Activated CD4-positive, alpha-beta T cell treated with anti-CD3 and anti-CD28 coated beads for 36 hours (primary cell): ENCODE measurements at regions of chr22 and their contacts with region 1.

Region 1: GRCh38 chr22:31160328-31160978 is 471 bp downstream of the RNF185 start:
- DNase-seq: peak; percentile 47
- ATAC-seq: peak; percentile 45
- H3K4me3 Mint-ChIP-seq: peak overlapping the region; percentile 85
- H3K27ac Mint-ChIP-seq: peak overlapping the region; percentile 95
- H3K4me1 Mint-ChIP-seq: peaks cover 29% of the 10 kb centered on the region
- H3K27me3 Mint-ChIP-seq: no peaks in the 10 kb centered on the region

Region 2: GRCh38 chr22:31173386-31174145 is 13.1 kb after region 1 on chr22:
- CTCF ChIA-PET with region 1: interaction called, 3 read pairs
- POLR2A ChIA-PET with region 1: no interaction called
- intact Hi-C with region 1: loop called in 1 of 2 experiments (anchors 1 kb)
- DNase-seq: peak; percentile 16
- ATAC-seq: peak; percentile 94
- H3K4me3 Mint-ChIP-seq: peak overlapping the region; percentile 29
- H3K27ac Mint-ChIP-seq: peak overlapping the region; percentile 80
- H3K4me1 Mint-ChIP-seq: peaks cover 41% of the 10 kb centered on the region
- H3K27me3 Mint-ChIP-seq: no peaks in the 10 kb centered on the region